ENCODE measurements at regions of chr22 and their contacts with region 1.

Region 1: GRCh38 chr22:31313366-31314147 is 21.3 kb upstream of the PIK3IP1 start:
- DNase-seq: peak; percentile 81
- H3K4me3 Mint-ChIP-seq: no peak overlapping the region
- H3K27ac Mint-ChIP-seq: peak overlapping the region; percentile 7
- H3K4me1 Mint-ChIP-seq: peaks cover 27% of the 10 kb centered on the region
- H3K27me3 Mint-ChIP-seq: peaks cover 3% of the 10 kb centered on the region

Region 2: GRCh38 chr22:31244044-31244942 is 69.3 kb before region 1 on chr22:
- CTCF ChIA-PET with region 1: no interaction called
- DNase-seq: no peak
- H3K4me3 Mint-ChIP-seq: no peak overlapping the region
- H3K27ac Mint-ChIP-seq: peak overlapping the region; percentile 79
- H3K4me1 Mint-ChIP-seq: peaks cover 47% of the 10 kb centered on the region
- H3K27me3 Mint-ChIP-seq: no peaks in the 10 kb centered on the region

Region 3: GRCh38 chr22:31290494-31291471 is 22.8 kb before region 1 on chr22:
- CTCF ChIA-PET with region 1: interaction called, 35 read pairs
- DNase-seq: peak; percentile 97
- H3K4me3 Mint-ChIP-seq: peak overlapping the region; percentile 99
- H3K27ac Mint-ChIP-seq: peak overlapping the region; percentile 99
- H3K4me1 Mint-ChIP-seq: peaks cover 72% of the 10 kb centered on the region
- H3K27me3 Mint-ChIP-seq: peaks cover 4% of the 10 kb centered on the region

Region 4: GRCh38 chr22:31295831-31296657 is 17.5 kb before region 1 on chr22:
- CTCF ChIA-PET with region 1: interaction called, 35 read pairs
- DNase-seq: no peak
- H3K4me3 Mint-ChIP-seq: peak overlapping the region; percentile 45
- H3K27ac Mint-ChIP-seq: peak overlapping the region; percentile 66
- H3K4me1 Mint-ChIP-seq: peaks cover 42% of the 10 kb centered on the region
- H3K27me3 Mint-ChIP-seq: peaks cover 4% of the 10 kb centered on the region

Region 5: GRCh38 chr22:31323578-31324550 is 10.3 kb after region 1 on chr22:
- CTCF ChIA-PET with region 1: interaction called, 13 read pairs
- DNase-seq: no peak
- H3K4me3 Mint-ChIP-seq: no peak overlapping the region
- H3K27ac Mint-ChIP-seq: peak overlapping the region; percentile 30
- H3K4me1 Mint-ChIP-seq: no peaks in the 10 kb centered on the region
- H3K27me3 Mint-ChIP-seq: no peaks in the 10 kb centered on the region

Region 6: GRCh38 chr22:31439808-31440207 is 126.3 kb after region 1 on chr22:
- CTCF ChIA-PET with region 1: no interaction called
- DNase-seq: no peak
- H3K4me3 Mint-ChIP-seq: no peak overlapping the region
- H3K27ac Mint-ChIP-seq: no peak overlapping the region
- H3K4me1 Mint-ChIP-seq: no peaks in the 10 kb centered on the region
- H3K27me3 Mint-ChIP-seq: no peaks in the 10 kb centered on the region

Measured in activated naive CD4-positive, alpha-beta T cell treated with anti-CD3 and anti-CD28 coated beads, Interleukin-2, amount 10 ng/mL, durations not matched to agents 7 days and 5 days (primary cell).